Motor neuron (in vitro differentiated cells): ENCODE measurements at regions of chr1 and their contacts with region 1.

Region 1: GRCh38 chr1:101309334-101310311 is 72.8 kb downstream of the S1PR1 start:
- ATAC-seq: peak; percentile 64 to 89 (median 85)
- H3K4me3 ChIP-seq: peak overlapping the region; percentile 0 to 24 (median 6)
- H3K27ac ChIP-seq: no peak overlapping the region
- H3K4me1 ChIP-seq: peaks cover 2 to 8% of the 10 kb centered on the region in 2 donors

Region 2: DNA sequence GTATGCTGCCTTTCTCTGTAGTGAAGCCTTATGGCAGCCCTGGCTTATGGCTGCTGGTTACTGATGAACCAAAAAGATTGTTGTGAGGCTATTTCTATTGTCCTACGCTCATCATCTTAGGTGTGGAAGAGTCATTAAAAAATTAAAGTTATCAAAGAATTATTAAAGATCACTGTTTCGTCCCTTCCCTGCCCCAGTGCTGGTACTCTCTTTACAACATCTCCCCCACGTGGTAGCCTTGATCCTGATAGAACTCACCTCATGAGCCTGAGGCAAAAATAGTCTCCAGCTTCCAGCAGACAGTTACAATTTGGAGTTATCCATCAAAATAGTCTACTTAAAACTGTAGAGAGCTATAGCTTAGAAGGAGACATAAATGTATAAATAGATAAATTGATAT is 128.7 kb after region 1 on chr1:
- in situ Hi-C with region 1: loop called in 1 of 9 experiments (anchors 25 kb)
- ATAC-seq: peak in 2 of 8 experiments; percentile 68 to 70
- H3K4me3 ChIP-seq: no peak overlapping the region
- H3K27ac ChIP-seq: no peak overlapping the region
- H3K4me1 ChIP-seq: peaks cover 6 to 27% of the 10 kb centered on the region in 2 donors

Region 3: DNA sequence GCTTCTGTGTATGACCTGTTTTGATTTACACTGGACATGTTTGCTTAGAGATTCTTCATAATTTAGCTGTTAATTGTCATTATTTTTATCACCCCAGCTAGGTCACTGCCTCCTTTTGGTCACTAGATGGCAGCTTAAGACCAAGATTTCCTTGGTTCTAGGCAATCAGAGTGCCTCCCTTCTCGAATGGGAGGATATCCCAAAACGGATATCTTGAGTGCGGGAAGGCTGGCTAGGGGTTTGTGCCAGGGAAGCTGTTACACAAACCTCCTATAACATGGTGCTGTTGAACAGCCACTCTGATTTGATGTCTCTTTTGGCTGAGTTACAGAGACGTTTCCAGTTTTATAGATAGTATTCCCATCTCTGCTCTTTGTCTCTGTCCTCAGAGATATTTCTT is 210.7 kb after region 1 on chr1:
- in situ Hi-C with region 1: no loop called
- ATAC-seq: peak; percentile 63 to 95 (median 78)
- H3K4me3 ChIP-seq: no peak overlapping the region
- H3K27ac ChIP-seq: no peak overlapping the region
- H3K4me1 ChIP-seq: no peaks in the 10 kb centered on the region